ENCODE measurements at regions of chr5 and their contacts with region 1.

Region 1: GRCh38 chr5:111158105-111158744 is 66.0 kb upstream of the CAMK4 start:
- DNase-seq: peak; percentile 58 to 80 (median 68)
- H3K4me3 ChIP-seq: no peak overlapping the region
- H3K27ac ChIP-seq: no peak overlapping the region
- H3K4me1 ChIP-seq: no peaks in the 10 kb centered on the region
- H3K27me3 ChIP-seq: no peaks in the 10 kb centered on the region

Region 2: GRCh38 chr5:111063700-111064322 is 94.4 kb before region 1 on chr5:
- CTCF ChIA-PET with region 1: no interaction called
- POLR2A ChIA-PET with region 1: no interaction called
- DNase-seq: no peak
- H3K4me3 ChIP-seq: no peak overlapping the region
- H3K27ac ChIP-seq: no peak overlapping the region
- H3K4me1 ChIP-seq: no peaks in the 10 kb centered on the region
- H3K27me3 ChIP-seq: peaks cover 10 to 30% (median 19%) of the 10 kb centered on the region in 5 experiments

Region 3: GRCh38 chr5:111278845-111279504 is 120.8 kb after region 1 on chr5:
- CTCF ChIA-PET with region 1: interaction called, 12 read pairs
- POLR2A ChIA-PET with region 1: no interaction called
- DNase-seq: peak; percentile 33 to 68 (median 58)
- H3K4me3 ChIP-seq: no peak overlapping the region
- H3K27ac ChIP-seq: no peak overlapping the region
- H3K4me1 ChIP-seq: no peaks in the 10 kb centered on the region
- H3K27me3 ChIP-seq: peaks cover 0 to 7% (median 2%) of the 10 kb centered on the region in 5 experiments

Region 4: GRCh38 chr5:112146323-112147226 is 988.4 kb after region 1 on chr5:
- CTCF ChIA-PET with region 1: interaction called, 13 read pairs
- POLR2A ChIA-PET with region 1: no interaction called
- DNase-seq: peak; percentile 71 to 88 (median 79)
- H3K4me3 ChIP-seq: no peak overlapping the region
- H3K27ac ChIP-seq: no peak overlapping the region
- H3K4me1 ChIP-seq: no peaks in the 10 kb centered on the region
- H3K27me3 ChIP-seq: no peaks in the 10 kb centered on the region